OCI-LY7 (cell line): ENCODE measurements at regions of chr2 and their contacts with region 1.

Region 1: DNA sequence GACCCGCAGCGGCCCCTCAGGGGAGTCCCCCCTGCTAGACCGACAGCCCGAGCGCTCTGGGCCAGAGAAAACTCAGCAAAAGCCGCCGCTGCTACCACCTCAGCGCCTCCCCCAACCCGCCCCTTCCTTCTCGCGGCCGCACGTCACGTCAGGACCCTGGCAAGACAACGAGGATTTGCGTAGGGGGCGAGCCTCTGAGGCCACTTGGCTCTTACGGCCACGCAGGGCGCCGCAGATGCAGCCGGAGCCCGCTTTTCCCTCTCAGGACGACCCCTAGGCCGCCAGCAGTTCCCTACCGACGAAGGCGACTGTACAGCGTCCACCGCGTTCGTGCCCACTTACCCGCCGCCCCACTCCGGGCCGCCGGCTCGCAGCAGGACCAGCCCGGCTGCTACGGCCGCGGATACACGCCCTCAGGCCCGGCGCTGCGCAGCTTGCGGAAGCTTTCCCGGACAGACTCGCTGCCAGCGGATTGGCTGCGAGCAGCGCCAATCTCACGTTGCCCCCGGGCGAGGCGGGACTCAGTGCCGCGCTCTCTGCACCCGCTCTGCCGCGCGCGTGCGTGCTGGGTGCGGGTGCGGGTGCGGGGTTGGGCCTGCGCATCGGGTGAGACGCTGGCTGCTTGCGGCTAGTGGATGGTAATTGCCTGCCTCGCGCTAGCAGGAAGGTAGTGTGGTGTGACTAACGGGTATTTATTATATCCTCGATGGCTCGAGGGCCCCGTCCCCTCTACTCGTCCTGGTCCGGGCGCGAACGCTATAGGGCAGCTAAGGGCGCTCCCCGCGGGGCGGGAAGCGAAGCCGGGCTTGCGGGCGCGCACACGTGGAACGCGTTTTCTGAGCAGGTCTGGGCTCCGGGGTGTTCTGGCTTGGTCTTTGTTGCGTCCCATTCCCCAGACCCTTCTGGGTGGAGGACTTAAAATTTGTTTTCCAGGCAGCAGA is at the starts of genes ORMDL1 and PMS1:
- DNase-seq: peak; percentile 97
- H3K4me3 ChIP-seq: peak within 1 kb of the TSS; percentile 79
- H3K27ac ChIP-seq: peak within 1 kb of the TSS; percentile 75
- H3K4me1 ChIP-seq: peaks cover 27% of the 10 kb centered on the region
- CTCF ChIP-seq: no peak
- total RNA-seq, gene ORMDL1: 49.3 and 59.3 TPM in 2 replicates
- total RNA-seq, gene PMS1: 31.2 and 37.3 TPM in 2 replicates

Region 2: GRCh38 chr2:189309331-189309730 is 474.9 kb before region 1 on chr2:
- CTCF ChIA-PET with region 1: no interaction called
- POLR2A ChIA-PET with region 1: no interaction called
- intact Hi-C with region 1: no loop called
- DNase-seq: no peak
- H3K4me3 ChIP-seq: no peak overlapping the region
- H3K27ac ChIP-seq: no peak overlapping the region
- H3K4me1 ChIP-seq: no peaks in the 10 kb centered on the region
- CTCF ChIP-seq: no peak

Region 3: DNA sequence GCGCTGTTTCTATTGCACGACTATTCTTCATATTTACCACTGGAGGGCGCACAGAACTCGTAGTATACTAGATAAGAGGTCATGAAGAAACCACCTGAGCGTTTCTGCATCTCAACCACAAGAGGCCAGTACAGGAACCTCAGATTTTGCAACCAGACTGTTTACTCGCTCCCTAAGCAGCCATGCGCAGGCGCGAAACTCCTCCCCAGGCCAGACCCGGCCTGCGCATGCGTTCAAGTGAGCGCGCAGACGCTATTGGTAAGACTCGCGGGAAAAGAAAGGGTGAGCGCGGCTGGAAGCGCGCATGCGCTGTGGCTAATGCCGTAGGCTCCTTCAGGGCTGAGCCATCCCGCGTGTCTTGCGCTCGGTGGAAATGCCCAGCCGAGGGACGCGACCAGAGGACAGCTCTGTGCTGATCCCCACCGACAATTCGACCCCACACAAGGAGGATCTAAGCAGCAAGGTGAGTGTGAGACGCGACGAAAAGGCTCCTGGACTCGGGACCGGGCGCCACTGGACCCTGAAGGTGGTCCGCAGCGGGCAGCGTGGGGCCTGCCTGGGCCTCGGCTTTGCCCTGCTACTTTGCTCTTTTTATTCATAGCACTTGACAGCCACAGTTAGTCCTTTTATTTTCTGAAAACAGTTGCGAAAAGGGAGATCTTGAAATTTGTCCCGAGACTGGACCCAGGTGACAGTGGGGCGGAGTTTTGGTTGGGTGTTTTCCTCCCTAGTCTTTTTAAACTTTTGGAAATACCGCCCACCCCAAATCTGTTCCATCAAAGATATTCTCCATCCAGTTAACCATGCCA is 122.8 kb before region 1 on chr2 and contains the start of gene ASNSD1:
- CTCF ChIA-PET with region 1: no interaction called
- POLR2A ChIA-PET with region 1: interaction called, 5 read pairs
- intact Hi-C with region 1: loop called (anchors 5 kb)
- DNase-seq: peak; percentile 100
- H3K4me3 ChIP-seq: peak within 1 kb of the TSS; percentile 90
- H3K27ac ChIP-seq: peak within 1 kb of the TSS; percentile 38
- H3K4me1 ChIP-seq: peaks cover 41% of the 10 kb centered on the region
- CTCF ChIP-seq: peak; percentile 99
- total RNA-seq, gene ASNSD1: 36.3 and 36.8 TPM in 2 replicates

Region 4: DNA sequence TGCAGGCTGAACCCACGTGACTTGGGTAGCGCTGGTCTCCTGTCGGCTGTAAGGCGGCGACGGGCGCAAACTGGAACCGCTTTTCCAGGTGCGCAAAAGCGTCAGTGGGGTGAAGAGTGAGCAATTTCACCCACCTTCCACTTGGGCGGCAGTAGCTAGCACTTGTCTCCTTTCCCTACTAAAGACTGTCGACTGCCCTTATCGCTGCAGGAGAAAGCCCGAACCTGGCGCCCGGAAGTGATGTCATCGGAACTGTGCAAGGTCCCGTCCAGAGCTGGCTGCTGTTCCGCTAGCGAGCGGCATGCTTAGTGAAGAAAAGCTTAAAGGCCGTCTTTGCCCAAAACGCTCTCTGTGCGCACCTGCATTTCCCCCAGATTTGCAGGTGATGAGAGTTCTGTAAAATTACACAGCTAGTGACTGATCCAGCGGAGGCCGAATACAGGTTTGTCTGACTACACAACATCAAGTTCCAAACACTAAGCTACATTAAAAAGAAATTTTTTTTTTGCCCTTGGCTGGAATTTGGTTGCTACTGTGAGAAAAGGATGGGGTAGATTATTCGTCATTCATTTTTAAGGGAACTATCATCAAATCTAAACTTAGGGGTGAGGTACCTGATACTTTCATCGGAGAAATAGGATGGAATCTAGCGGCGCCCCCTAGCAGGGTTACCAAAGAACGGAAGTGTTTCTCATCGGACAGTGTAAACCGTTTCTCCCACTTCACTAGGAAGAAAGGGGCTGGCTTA is 21.5 kb before region 1 on chr2 and contains the start of gene OSGEPL1:
- CTCF ChIA-PET with region 1: no interaction called
- POLR2A ChIA-PET with region 1: interaction called, 11 read pairs
- intact Hi-C with region 1: loop called (anchors 1 kb)
- DNase-seq: peak; percentile 96
- H3K4me3 ChIP-seq: peak within 1 kb of the TSS; percentile 82
- H3K27ac ChIP-seq: peak within 1 kb of the TSS; percentile 97
- H3K4me1 ChIP-seq: peaks cover 20% of the 10 kb centered on the region
- CTCF ChIP-seq: peak; percentile 85
- total RNA-seq, gene OSGEPL1: 8.7 and 10.4 TPM in 2 replicates

Region 5: DNA sequence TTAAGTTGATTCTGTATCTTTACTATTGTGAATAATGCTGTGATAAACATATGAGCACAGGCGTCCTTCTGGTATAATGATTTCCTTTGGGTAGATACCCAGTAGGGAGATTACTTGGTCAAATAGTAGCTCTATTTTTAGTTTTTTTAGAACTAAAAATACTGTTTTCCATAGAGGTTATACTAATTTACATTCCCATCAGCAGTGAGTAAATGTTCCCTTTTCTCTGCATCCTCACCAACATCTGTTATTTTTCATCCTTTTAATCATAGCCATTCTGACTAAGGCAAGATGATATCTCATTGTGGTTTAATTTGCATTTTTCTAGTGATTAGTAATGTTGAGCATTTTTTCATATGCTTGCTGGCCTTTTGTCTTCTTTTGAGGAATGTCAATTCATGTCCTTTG is 35.1 kb after region 1 on chr2:
- CTCF ChIA-PET with region 1: no interaction called
- POLR2A ChIA-PET with region 1: no interaction called
- intact Hi-C with region 1: no loop called
- DNase-seq: no peak
- H3K4me3 ChIP-seq: no peak overlapping the region
- H3K27ac ChIP-seq: no peak overlapping the region
- H3K4me1 ChIP-seq: no peaks in the 10 kb centered on the region
- CTCF ChIP-seq: no peak

Region 6: GRCh38 chr2:189952536-189953109 is 168.4 kb after region 1 on chr2:
- CTCF ChIA-PET with region 1: no interaction called
- POLR2A ChIA-PET with region 1: no interaction called
- intact Hi-C with region 1: loop called (anchors 5 kb)
- DNase-seq: peak; percentile 77
- H3K4me3 ChIP-seq: peak overlapping the region; percentile 37
- H3K27ac ChIP-seq: peak overlapping the region; percentile 94
- H3K4me1 ChIP-seq: peaks cover 54% of the 10 kb centered on the region
- CTCF ChIP-seq: no peak